Heart right ventricle (tissue), 16 donors: ENCODE measurements at regions of chr7 and their contacts with region 1.

Region 1: GRCh38 chr7:133081599-133082389 is at the start of gene CHCHD3:
- DNase-seq: peak; percentile 95 to 99
- ATAC-seq: peak; percentile 99 to 100 (median 100)
- H3K4me3 ChIP-seq: peak within 1 kb of the TSS; percentile 69 to 96 (median 86)
- H3K27ac ChIP-seq: peak within 1 kb of the TSS; percentile 87 to 93 (median 90)
- H3K4me1 ChIP-seq: peaks cover 0 to 46% (median 37%) of the 10 kb centered on the region in 9 donors
- H3K27me3 ChIP-seq: peaks cover 0 to 4% (median 0%) of the 10 kb centered on the region in 7 donors
- CTCF ChIP-seq: no peak
- total RNA-seq, gene CHCHD3: 133 to 215 (median 192) TPM

Region 2: GRCh38 chr7:133135451-133135850 is 53.7 kb after region 1 on chr7:
- intact Hi-C with region 1: no loop called
- DNase-seq: no peak
- ATAC-seq: no peak
- H3K4me3 ChIP-seq: no peak overlapping the region
- H3K27ac ChIP-seq: no peak overlapping the region
- H3K4me1 ChIP-seq: no peaks in the 10 kb centered on the region
- H3K27me3 ChIP-seq: peaks cover 0 to 5% (median 0%) of the 10 kb centered on the region in 7 donors
- CTCF ChIP-seq: no peak

Region 3: DNA sequence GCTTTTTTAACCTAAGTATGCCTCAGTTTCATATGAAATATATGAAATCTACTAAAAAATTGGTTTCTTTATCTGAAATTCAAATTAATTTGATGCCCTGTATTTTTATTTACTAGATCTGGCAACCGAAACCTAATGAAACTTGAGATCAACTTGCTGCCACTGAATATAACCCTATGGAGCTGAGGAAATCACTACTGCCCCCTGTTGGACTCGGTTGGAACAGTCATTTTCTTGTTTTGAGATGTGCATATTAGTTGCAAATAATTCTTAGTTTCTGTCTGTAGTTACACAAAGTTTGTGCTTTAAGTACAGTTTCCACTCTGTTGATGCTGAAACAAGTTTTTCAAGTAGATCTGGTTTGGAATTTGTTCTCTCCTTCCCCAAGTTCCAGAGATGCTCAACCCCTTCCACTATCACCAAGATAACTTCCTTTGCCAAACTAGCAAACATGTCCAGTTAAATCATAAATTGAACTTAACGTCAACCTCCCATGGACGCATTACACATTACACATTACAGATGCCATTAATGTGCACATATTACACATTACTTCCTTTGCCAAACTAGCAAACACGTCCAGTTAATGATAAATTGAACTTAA is 148.9 kb after region 1 on chr7:
- intact Hi-C with region 1: loop called in 1 of 10 experiments (anchors 10 kb)
- DNase-seq: peak in 1 of 2 donors; percentile 40
- ATAC-seq: no peak
- H3K4me3 ChIP-seq: no peak overlapping the region
- H3K27ac ChIP-seq: no peak overlapping the region
- H3K4me1 ChIP-seq: peaks cover 0 to 7% (median 0%) of the 10 kb centered on the region in 9 donors
- H3K27me3 ChIP-seq: peaks cover 0 to 3% (median 0%) of the 10 kb centered on the region in 7 donors
- CTCF ChIP-seq: peak; percentile 41 to 83 (median 74)

Region 4: DNA sequence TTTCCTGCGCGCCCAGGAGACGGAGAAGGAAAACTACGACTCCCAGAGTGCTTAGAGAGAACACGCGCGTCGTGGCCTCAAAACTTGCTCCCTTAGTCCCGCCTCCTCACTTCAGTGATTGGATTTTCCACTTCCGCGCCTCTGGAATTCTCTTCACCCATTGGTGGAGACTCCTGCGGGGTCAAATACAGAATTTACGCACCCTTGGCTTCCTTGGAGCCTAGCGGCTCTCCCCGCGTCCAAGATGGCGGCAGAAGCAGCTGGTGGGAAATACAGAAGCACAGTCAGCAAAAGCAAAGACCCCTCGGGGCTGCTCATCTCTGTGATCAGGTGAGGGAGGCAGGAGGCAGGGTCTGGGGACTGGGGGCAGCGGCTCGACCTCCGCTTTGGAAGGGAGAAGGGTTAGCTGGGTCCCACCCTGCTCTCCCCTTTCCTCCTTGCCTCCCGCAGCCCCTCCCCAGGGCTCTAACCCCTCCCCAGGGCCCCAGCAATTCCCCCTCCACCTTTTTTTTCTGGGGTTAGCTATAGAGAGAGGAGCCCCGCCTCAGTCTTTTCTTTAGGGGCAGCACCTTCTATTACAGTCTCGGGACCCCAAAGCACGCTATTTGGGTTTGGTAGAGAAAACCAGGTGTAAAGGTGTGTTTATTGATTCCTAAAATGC is 171.2 kb after region 1 on chr7 and contains the start of gene EXOC4:
- intact Hi-C with region 1: loop called in 1 of 10 experiments (anchors 10 kb)
- DNase-seq: peak; percentile 75 to 98
- ATAC-seq: peak; percentile 100
- H3K4me3 ChIP-seq: peak within 1 kb of the TSS; percentile 79 to 95 (median 88)
- H3K27ac ChIP-seq: peak within 1 kb of the TSS; percentile 46 to 97 (median 88)
- H3K4me1 ChIP-seq: peaks cover 0 to 39% (median 16%) of the 10 kb centered on the region in 9 donors
- H3K27me3 ChIP-seq: no peaks in the 10 kb centered on the region
- CTCF ChIP-seq: no peak
- total RNA-seq, gene EXOC4: 26.2 to 41.7 (median 35.5) TPM

Region 5: GRCh38 chr7:133310232-133310862 is 228.6 kb after region 1 on chr7:
- intact Hi-C with region 1: no loop called
- DNase-seq: peak in 1 of 2 donors; percentile 46
- ATAC-seq: peak in 6 of 8 donors; percentile 51 to 83 (median 59)
- H3K4me3 ChIP-seq: no peak overlapping the region
- H3K27ac ChIP-seq: peak overlapping the region in 1 of 10 donors; percentile 0
- H3K4me1 ChIP-seq: peaks cover 0 to 15% (median 0%) of the 10 kb centered on the region in 9 donors
- H3K27me3 ChIP-seq: no peaks in the 10 kb centered on the region
- CTCF ChIP-seq: no peak